ENCODE measurements at regions of chr1 and their contacts with region 1.

Region 1: DNA sequence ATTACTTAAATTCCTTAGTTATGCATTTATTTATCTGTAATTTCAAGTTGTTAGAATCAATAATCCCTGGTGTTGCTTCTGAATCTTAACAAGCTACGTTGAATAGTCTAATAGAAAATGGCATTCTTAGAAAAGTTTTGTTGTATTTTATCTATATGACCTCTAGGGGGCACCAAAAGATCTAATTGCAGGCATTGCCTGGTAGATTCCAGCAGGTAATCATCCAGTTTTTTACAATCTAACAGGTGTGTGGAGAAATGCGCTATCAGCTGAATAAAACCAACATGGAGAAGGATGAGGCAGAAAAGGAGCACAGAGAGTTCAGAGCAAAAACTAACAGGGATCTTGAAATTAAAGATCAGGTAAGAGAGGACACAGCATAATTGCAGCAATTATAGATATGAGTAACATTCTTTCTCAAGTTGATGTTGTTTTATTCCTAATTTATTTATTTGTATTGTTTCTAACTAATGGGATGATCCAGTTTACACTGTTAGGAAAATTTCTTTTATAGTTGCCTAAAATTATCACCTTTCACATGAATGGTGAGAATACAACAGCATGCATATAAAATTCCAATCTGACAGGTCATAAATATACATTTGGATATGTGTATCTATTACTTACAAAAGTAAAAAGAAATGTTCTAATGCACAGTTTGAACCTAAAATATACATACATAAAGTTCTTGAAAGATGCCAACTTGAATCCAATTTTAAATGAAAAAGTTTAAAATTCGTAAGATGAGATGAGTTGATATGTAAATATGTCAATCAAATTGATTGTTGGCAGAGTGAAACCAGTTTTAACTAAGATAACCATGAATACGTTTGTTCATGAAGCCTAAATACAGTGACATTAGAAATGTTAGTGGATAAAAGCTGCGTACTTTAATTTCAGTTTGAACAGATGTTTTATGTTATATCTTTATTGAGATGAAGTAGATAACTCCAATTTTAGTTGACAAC is 88.4 kb downstream of the SDCCAG8 start:
- DNase-seq: no peak
- H3K4me3 ChIP-seq: no peak overlapping the region
- H3K27ac ChIP-seq: no peak overlapping the region
- H3K27me3 ChIP-seq: no peaks in the 10 kb centered on the region
- CTCF ChIP-seq: peak; percentile 73

Region 2: DNA sequence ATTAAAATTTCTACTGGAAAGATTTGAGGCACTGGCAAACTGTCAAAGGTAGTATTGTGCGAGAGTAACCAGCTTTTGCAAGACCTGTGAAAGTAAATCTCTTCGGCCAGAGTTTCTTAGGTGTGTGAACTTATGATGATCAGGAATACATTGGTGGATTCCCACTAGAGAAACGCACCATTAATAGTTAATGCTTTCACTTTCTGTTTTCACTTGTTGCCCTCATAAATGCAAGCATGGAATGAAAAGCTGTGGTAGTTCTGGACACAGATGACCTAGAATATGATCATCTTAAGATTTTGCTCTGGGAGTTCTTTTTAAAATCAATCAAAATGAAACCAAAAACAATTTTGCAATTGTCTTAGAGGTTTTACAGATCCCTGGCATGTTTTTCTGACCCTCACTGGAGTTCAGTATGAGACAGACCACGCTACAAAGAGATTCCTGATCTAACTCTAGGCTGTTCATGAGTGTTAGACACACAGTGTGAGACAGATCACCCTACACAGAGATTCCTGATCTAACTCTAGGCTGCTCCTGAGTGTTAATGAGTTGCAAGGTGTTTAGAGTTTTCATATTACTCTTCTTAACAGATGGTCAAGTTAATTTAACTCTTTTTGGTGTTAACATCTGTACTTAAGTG is 10.4 kb after region 1 on chr1:
- CTCF ChIA-PET with region 1: interaction called, 10 read pairs
- POLR2A ChIA-PET with region 1: no interaction called
- DNase-seq: no peak
- H3K4me3 ChIP-seq: no peak overlapping the region
- H3K27ac ChIP-seq: no peak overlapping the region
- H3K27me3 ChIP-seq: no peaks in the 10 kb centered on the region
- CTCF ChIP-seq: no peak

Region 3: DNA sequence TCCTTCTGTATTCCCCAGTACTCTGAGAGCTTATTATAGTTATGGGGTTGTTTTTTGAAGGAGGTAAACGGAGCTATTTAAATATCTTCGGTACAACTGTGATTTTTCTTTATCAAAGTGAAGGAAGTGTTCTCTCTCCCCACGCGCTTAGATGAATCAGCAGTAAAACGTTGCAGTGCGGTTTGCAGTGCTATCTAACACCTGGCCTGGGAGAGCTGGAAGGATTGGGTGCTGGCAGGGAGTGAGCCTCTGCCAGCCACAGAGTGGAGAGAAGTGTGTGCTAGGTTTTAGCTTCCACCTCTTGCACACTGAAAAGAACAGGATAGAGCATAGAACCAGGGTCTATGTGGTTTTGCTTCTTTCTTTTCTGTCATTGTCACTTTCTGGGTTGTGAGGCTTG is 77.5 kb after region 1 on chr1:
- CTCF ChIA-PET with region 1: no interaction called
- POLR2A ChIA-PET with region 1: no interaction called
- DNase-seq: peak; percentile 58
- H3K4me3 ChIP-seq: peak overlapping the region; percentile 8; the same call in 1 of the 2 replicates
- H3K27ac ChIP-seq: peak overlapping the region; percentile 80
- H3K27me3 ChIP-seq: no peaks in the 10 kb centered on the region
- CTCF ChIP-seq: no peak

Region 4: DNA sequence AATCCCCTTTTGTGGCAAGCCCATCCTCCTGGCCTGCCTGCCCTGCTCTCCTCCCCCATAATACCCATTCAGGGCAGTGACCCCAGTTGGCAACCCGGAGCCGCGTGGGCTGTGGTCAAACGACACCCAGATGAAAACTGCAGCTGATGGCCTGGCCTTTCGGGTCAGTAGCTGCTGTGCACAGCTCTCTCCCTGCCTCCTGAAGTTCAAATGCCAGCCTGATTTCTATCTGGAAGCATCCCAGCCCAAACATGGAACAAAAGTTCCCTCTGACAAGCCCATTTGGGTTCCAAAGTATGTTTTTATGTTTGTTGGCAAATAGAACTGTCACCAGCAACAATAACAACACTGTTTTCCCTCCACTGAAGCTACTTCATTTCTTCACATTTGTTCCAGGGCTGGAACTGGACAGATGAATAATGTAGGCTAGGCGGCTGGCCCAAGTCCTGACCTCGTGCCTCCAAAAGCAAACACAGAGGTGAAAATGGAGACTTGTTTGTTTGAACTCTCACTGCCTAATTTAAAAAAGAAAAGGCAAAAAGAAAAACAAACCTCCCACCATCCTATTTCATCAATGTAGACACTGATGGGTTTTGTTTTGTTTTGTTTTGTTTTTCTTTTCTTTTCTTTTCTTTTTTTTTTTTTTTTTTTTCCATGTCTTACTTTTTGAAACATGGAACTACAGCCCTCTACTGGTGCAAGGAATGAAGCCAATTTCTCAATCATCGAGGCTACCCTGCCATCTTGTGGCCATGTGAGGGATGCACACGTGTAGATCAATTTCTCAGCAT is 928.4 kb after region 1 on chr1:
- CTCF ChIA-PET with region 1: interaction called, 18 read pairs
- POLR2A ChIA-PET with region 1: no interaction called
- DNase-seq: peak; percentile 88
- H3K4me3 ChIP-seq: no peak overlapping the region
- H3K27ac ChIP-seq: no peak overlapping the region
- H3K27me3 ChIP-seq: no peaks in the 10 kb centered on the region
- CTCF ChIP-seq: peak; percentile 98